ENCODE measurements at regions of chr19 and their contacts with region 1.

Region 1: DNA sequence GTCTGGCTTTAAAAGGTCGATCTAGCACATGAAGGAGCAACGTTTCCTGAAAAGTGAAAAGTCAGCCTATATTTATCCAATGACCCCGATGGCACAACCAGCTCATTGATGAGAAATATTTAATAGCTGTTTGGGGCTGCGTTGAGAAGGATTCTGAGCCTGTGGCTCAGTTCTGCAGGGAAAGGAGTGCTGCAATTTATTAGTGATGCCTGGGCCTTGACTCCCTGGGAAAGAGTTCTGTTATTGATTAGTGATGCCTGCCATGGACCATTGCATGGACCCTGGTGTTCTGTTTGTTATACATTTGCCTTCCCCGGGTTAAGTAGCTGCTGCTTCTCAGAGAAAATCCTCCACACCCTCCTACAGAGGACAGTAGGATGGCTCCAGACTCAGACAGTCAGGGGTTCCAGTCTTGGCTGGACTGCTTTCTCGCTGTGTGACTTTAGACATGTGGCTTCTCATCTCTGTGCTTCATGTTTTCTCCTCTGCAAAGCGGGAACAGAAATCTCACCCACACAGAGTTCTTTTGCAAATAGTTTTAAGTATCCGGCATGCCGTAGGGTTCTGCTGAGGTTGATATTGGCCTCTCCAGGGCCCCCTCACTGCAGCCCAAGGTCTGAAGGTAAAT is 17.7 kb upstream of the PTPRS start:
- DNase-seq: no peak

Region 2: GRCh38 chr19:5403968-5404640 is 45.8 kb after region 1 on chr19:
- intact Hi-C with region 1: loop called in 1 of 2 experiments (anchors 1 kb)
- DNase-seq: peak; percentile 95

Region 3: DNA sequence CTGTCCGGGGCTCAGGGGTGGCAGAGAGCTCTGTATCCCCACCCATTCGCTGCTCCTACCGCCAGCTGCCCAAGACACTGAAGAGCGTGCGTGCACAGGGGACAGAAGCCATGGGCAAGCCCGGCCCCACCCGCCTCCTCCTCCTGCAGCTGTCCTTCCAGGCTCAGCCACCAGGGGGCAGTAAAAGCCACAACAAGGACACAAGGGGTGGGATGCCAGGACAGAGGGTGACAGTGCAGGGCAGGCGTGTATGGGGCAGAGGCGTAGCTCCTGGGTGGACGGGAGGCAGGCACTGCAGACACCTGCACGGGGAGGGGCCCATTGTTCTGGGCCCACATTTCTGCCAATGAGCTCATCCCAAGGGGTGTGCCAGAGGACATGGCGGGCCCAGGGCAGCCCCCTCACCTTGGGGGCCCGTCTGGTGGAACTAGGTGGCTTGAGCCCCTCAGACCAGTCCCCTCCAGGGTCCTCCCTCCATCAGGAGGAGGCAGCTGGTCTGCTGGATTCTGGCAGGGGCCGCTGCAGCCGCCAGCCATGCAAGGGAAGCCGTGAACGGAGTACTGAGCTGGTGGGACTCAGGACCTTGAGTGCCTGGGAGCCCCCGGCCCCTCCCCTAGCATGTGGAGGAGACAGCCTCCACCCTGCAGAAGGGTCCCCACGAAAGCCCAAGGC is 860.3 kb after region 1 on chr19:
- intact Hi-C with region 1: no loop called
- DNase-seq: peak; percentile 97

Measured in posterior vena cava (tissue), 2 donors.